GM18951 (cell line): ENCODE measurements at regions of chr16 and their contacts with region 1.

Region 1: DNA sequence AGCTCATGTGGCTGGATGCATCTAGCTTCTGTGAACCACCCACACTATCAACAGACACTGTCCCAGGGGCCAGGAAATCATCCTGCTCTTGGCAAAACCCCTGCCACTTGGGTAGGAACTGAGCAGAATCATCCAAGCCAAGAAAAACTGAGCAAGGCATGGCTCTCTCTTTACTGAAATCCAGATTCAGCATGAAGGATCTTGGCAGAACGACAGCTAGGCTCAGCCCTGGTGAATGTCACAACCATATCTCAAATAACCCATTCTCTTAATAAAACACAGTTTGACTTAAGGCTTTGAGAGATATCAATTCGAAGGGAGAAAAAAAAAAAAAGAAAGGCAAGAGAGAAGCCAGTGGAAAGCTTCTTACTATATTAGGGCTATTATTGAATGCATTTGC is 72.2 kb downstream of the MAF start:
- POLR2A ChIP-seq: no peak

Region 2: DNA sequence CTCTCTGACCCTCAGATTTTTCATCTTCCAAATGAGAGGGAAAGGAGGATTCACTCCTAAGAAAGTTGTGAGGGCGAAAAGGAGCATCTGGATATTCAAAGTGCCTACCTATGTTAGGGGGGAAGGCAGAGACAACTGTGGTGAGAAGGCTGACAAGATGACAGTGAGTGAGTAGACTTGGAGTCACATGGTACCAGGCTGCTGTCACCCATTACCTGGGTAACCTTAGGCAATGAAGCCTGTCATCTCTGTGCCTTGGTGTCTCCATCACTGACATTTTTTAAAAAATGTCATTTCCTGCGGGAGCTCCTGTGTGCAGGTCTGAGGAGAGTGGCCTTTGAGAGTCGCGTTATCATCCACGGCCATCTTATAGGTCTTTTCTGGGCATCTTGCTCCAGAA is 51.8 kb before region 1 on chr16:
- in situ Hi-C with region 1: loop called (anchors 5 kb)
- POLR2A ChIP-seq: no peak

Region 3: GRCh38 chr16:79740252-79740651 is 211.9 kb after region 1 on chr16:
- in situ Hi-C with region 1: no loop called
- POLR2A ChIP-seq: no peak

Region 4: DNA sequence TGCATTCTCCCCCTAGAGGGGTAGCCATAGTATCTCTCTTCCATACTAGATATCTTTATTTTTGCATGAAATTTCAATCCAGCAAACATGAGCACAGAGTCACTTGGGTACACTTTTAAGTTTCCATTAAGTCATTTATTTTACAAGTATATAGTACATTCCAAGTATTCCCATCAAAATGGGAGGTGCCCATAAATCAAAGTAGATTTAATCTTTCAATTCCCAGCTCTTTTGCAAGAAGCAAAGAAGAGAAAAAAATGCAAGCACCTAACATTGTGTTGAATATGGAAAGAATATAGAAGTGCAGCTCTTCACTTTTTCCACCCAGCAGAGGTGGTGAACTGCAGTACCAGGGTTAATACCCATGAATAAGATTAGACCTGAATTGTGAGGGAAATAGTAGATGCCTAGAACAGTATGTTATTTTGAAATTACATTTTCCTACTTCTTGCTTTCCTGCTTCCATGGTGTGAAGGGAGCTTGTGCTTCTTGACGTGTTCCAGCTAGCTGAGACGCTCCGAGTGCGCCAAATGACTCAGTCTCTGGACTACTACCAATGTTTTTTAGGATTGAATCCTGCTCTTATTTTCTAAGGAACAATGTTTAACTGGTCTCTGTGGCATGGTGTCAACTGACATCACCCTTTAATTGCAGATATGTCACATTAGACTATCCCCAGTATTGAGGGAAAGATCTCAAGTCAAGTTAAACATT is 223.3 kb after region 1 on chr16:
- in situ Hi-C with region 1: no loop called
- POLR2A ChIP-seq: no peak